ENCODE measurements at regions of chr1 and their contacts with region 1.

Region 1: GRCh38 chr1:111256988-111257658 is 29.6 kb downstream of the CHI3L2 start:
- DNase-seq: no peak
- H3K4me3 Mint-ChIP-seq: no peak overlapping the region
- H3K27ac Mint-ChIP-seq: no peak overlapping the region
- H3K4me1 Mint-ChIP-seq: no peaks in the 10 kb centered on the region
- H3K27me3 Mint-ChIP-seq: peaks cover 6% of the 10 kb centered on the region

Region 2: GRCh38 chr1:111222308-111223125 is 34.6 kb before region 1 on chr1:
- CTCF ChIA-PET with region 1: no interaction called
- POLR2A ChIA-PET with region 1: no interaction called
- DNase-seq: peak; percentile 84
- H3K4me3 Mint-ChIP-seq: peak overlapping the region; percentile 68
- H3K27ac Mint-ChIP-seq: peak overlapping the region; percentile 93
- H3K4me1 Mint-ChIP-seq: peaks cover 92% of the 10 kb centered on the region
- H3K27me3 Mint-ChIP-seq: no peaks in the 10 kb centered on the region

Region 3: GRCh38 chr1:111270781-111271463 is 13.8 kb after region 1 on chr1:
- CTCF ChIA-PET with region 1: interaction called, 10 read pairs
- POLR2A ChIA-PET with region 1: no interaction called
- DNase-seq: no peak
- H3K4me3 Mint-ChIP-seq: no peak overlapping the region
- H3K27ac Mint-ChIP-seq: no peak overlapping the region
- H3K4me1 Mint-ChIP-seq: peaks cover 17% of the 10 kb centered on the region
- H3K27me3 Mint-ChIP-seq: peaks cover 35% of the 10 kb centered on the region